CD8-positive, alpha-beta T cell (primary cell): ENCODE measurements at regions of chr15 and their contacts with region 1.

Region 1: DNA sequence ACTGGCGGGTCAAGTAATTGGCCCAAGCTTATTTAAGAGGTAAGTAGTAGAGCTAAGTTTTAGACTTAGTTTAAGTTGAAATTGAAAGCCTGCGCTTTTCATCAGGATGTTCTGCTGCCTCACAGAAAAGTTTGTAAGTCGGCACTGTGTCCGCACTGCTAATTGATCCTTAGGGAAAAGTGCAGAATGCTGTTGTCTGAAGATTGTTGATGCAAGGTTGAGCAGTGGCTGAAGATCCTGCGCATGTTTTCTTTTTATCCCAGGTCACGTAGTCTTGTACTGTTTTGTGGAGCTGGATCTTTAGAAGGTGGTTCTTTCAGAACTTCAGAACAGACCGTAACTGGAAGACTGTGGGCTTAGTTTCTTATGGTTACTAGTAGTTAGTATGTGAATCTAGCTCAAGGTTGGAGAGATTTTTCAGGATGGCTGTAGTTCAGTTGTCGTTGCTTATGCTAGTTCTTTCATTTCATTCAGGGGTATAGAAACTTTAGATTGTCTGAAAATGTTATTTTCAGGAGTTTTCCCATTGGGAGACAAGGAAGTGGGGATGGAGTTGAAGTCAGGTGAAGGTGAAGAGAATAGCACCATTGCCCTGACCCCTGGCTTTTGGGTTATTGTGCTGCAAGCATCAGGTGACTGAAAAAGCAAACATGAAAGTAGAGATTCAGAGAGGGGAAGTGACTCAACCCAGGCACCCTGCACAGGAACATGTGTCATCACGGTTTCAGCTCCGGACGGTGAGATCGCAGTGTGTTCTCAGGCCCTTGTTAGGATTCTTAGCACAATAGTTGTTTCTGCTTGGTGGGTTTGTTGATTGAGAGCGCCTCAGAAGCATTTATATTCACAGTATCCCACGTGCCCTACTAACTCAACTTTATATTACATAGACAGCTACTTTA is 32.8 kb downstream of the AKAP13 start:
- DNase-seq: peak; percentile 42 to 86 (median 75)
- ATAC-seq: peak; percentile 95
- H3K4me3 ChIP-seq: peak overlapping the region in 1 of 2 experiments; percentile 12
- H3K4me3 Mint-ChIP-seq: peak overlapping the region; percentile 56
- H3K27ac ChIP-seq: peak overlapping the region in 1 of 2 experiments; percentile 77
- H3K27ac Mint-ChIP-seq: peak overlapping the region; percentile 89
- H3K4me1 ChIP-seq: peaks cover 26% of the 10 kb centered on the region
- H3K4me1 Mint-ChIP-seq: peaks cover 65% of the 10 kb centered on the region
- H3K27me3 ChIP-seq: no peaks in the 10 kb centered on the region
- H3K27me3 Mint-ChIP-seq: no peaks in the 10 kb centered on the region
- CTCF ChIP-seq: no peak

Region 2: DNA sequence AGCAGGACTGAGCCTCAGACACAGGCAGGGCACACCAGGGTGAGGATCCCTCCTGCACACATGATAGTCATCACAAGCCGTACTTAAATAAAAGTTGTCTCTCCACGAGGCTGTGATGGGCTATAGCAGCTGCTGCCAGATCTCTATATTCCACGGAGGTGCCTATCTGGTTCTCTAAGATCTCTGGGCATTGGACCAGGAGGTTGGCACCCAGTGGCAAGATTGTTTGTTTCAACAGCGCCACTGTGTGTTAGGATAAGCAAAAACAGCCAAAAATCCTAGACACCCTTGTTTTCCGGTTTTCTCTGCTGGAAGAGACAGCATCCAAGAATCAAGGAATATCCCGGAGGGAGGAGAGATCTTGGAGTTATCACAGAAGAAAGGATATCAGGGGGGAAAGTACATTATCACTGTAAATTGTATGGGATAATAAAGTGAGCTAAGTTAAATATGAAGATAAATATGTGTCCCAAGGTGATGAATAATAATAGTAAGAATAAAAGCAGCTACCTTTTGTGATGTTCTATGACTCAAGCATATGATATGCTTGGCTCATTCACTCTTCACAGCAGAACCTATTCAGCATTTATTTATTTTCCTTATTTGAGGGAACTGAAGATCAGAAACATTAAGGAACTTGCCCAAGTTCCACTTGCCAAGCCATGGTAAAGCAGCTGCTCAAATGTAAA is 123.4 kb before region 1 on chr15:
- CTCF ChIA-PET with region 1: interaction called, 146 read pairs
- POLR2A ChIA-PET with region 1: no interaction called
- intact Hi-C with region 1: no loop called
- DNase-seq: peak in 3 of 9 experiments; percentile 28 to 60 (median 40)
- ATAC-seq: no peak
- H3K4me3 ChIP-seq: no peak overlapping the region
- H3K4me3 Mint-ChIP-seq: no peak overlapping the region
- H3K27ac ChIP-seq: no peak overlapping the region
- H3K27ac Mint-ChIP-seq: no peak overlapping the region
- H3K4me1 ChIP-seq: no peaks in the 10 kb centered on the region
- H3K4me1 Mint-ChIP-seq: no peaks in the 10 kb centered on the region
- H3K27me3 ChIP-seq: no peaks in the 10 kb centered on the region
- H3K27me3 Mint-ChIP-seq: peaks cover 9% of the 10 kb centered on the region
- CTCF ChIP-seq: peak; percentile 45

Region 3: GRCh38 chr15:85397926-85398325 is 15.3 kb before region 1 on chr15:
- CTCF ChIA-PET with region 1: interaction called, 16 read pairs
- POLR2A ChIA-PET with region 1: interaction called, 13 read pairs
- intact Hi-C with region 1: loop called in 1 of 2 experiments (anchors 1 kb)
- DNase-seq: no peak
- ATAC-seq: no peak
- H3K4me3 ChIP-seq: no peak overlapping the region
- H3K4me3 Mint-ChIP-seq: no peak overlapping the region
- H3K27ac ChIP-seq: no peak overlapping the region
- H3K27ac Mint-ChIP-seq: no peak overlapping the region
- H3K4me1 ChIP-seq: peaks cover 21% of the 10 kb centered on the region
- H3K4me1 Mint-ChIP-seq: peaks cover 80% of the 10 kb centered on the region
- H3K27me3 ChIP-seq: no peaks in the 10 kb centered on the region
- H3K27me3 Mint-ChIP-seq: no peaks in the 10 kb centered on the region
- CTCF ChIP-seq: no peak